K562 (cell line): ENCODE measurements at regions of chr6 and their contacts with region 1.

Region 1: GRCh38 chr6:143782481-143782880 is 60.7 kb upstream of the LTV1 start:
- DNase-seq: no peak
- ATAC-seq: no peak
- H3K4me3 ChIP-seq: no peak overlapping the region
- H3K27ac ChIP-seq: no peak overlapping the region
- H3K4me1 ChIP-seq: peaks cover 0 to 7% of the 10 kb centered on the region in 2 experiments; a peak in 2 of 5 replicates
- H3K27me3 ChIP-seq: no peaks in the 10 kb centered on the region
- CTCF ChIP-seq: no peak
- EP300 ChIP-seq: no peak
- POLR2A ChIP-seq: no peak
- RAD21 ChIP-seq: no peak

Region 2: GRCh38 chr6:143620447-143620846 is 162.0 kb before region 1 on chr6:
- CTCF ChIA-PET with region 1: no interaction called
- POLR2A ChIA-PET with region 1: no interaction called
- in situ Hi-C with region 1: no loop called
- intact Hi-C with region 1: no loop called
- DNase-seq: no peak
- ATAC-seq: no peak
- H3K4me3 ChIP-seq: no peak overlapping the region
- H3K27ac ChIP-seq: no peak overlapping the region
- H3K4me1 ChIP-seq: no peaks in the 10 kb centered on the region
- H3K27me3 ChIP-seq: no peaks in the 10 kb centered on the region
- CTCF ChIP-seq: no peak
- EP300 ChIP-seq: no peak
- POLR2A ChIP-seq: no peak
- RAD21 ChIP-seq: no peak

Region 3: GRCh38 chr6:143792402-143793279 is 10.2 kb after region 1 on chr6:
- CTCF ChIA-PET with region 1: no interaction called
- POLR2A ChIA-PET with region 1: interaction called, 11 read pairs
- in situ Hi-C with region 1: no loop called
- intact Hi-C with region 1: no loop called
- DNase-seq: peak in 1 of 4 experiments; percentile 33
- ATAC-seq: peak; percentile 66
- H3K4me3 ChIP-seq: no peak overlapping the region
- H3K27ac ChIP-seq: peak overlapping the region; percentile 11; the same call in 2 of the 3 replicates
- H3K4me1 ChIP-seq: peaks cover 12 to 18% of the 10 kb centered on the region in 2 experiments; a peak in 4 of 5 replicates
- H3K27me3 ChIP-seq: no peaks in the 10 kb centered on the region
- CTCF ChIP-seq: no peak
- EP300 ChIP-seq: no peak
- POLR2A ChIP-seq: no peak
- RAD21 ChIP-seq: no peak

Region 4: DNA sequence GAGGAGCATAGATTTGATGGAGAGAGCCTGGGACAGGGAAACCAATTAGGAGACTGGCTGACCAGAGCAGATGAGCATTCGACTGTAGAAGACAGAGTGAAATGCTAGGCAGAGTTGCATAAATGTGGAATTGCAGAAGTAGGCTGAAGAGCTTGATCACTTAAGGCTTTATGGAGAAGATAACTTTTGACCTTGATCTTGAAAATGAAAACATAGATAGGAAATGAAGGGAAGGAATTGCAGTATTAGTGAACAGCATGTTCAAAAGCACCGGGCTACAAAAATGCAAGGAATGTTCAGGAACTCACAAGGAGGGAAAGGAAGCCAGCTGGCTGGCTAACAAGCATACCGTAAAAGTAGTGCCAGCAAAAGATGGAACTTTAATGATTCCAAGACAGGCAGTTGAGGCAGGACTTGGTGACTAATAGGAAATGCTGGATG is 40.1 kb after region 1 on chr6:
- CTCF ChIA-PET with region 1: no interaction called
- POLR2A ChIA-PET with region 1: no interaction called
- in situ Hi-C with region 1: no loop called
- intact Hi-C with region 1: loop called (anchors 1 kb)
- DNase-seq: no peak
- ATAC-seq: no peak
- H3K4me3 ChIP-seq: no peak overlapping the region
- H3K27ac ChIP-seq: no peak overlapping the region
- H3K4me1 ChIP-seq: peaks cover 0 to 6% of the 10 kb centered on the region in 2 experiments; a peak in 1 of 5 replicates
- H3K27me3 ChIP-seq: no peaks in the 10 kb centered on the region
- CTCF ChIP-seq: no peak
- EP300 ChIP-seq: no peak
- POLR2A ChIP-seq: no peak
- RAD21 ChIP-seq: no peak